ENCODE measurements at regions of chrX and their contacts with region 1.

Region 1: DNA sequence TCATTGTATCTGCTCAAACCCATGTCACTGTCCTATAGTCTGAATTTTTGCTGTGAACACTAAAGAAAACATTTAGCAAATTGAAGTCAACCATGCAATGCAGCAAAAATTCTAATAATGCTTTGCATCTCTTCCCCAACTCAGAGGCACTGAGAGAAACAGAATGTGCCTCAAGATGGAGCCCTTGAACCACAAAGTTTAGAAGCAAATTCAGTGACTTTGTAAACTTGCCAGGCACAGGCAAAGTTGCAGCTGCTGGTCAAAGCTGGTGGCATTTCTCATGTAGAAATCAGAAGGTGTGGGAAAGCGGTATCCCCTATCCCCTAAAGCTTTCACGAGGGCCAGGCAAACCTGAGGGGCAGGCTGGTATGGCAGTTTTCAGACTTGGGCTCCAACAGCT is 121.7 kb upstream of the DIPK2B start:
- DNase-seq: no peak
- H3K4me3 ChIP-seq: no peak overlapping the region
- H3K27ac ChIP-seq: no peak overlapping the region
- H3K4me1 ChIP-seq: no peaks in the 10 kb centered on the region
- H3K27me3 ChIP-seq: no peaks in the 10 kb centered on the region
- CTCF ChIP-seq: peak in 2 of 3 experiments; percentile 30 to 65

Region 2: GRCh38 chrX:45385757-45386156 is 63.4 kb after region 1 on chrX:
- intact Hi-C with region 1: no loop called
- DNase-seq: no peak
- H3K4me3 ChIP-seq: no peak overlapping the region
- H3K27ac ChIP-seq: no peak overlapping the region
- H3K4me1 ChIP-seq: no peaks in the 10 kb centered on the region
- H3K27me3 ChIP-seq: no peaks in the 10 kb centered on the region
- CTCF ChIP-seq: no peak

Region 3: DNA sequence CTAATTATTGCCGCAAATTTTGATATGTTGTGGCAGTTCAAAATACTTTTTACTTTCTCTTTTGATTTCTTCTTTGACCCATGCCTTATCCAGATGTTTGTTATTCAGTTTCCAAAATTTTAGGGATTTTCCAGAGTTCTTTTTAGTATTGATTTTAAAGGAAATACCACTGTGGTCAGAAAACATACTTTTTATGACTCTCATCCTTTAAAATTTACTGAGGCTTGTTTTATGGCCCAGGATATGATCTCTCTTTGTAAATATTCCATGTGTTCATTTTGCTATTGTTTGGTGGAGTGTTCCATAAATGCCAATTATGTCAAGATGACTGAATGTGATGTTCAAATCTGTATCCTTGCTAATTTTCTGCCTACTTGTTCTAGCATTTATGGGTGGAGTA is 150.6 kb after region 1 on chrX:
- intact Hi-C with region 1: no loop called
- DNase-seq: no peak
- H3K4me3 ChIP-seq: no peak overlapping the region
- H3K27ac ChIP-seq: no peak overlapping the region
- H3K4me1 ChIP-seq: no peaks in the 10 kb centered on the region
- H3K27me3 ChIP-seq: no peaks in the 10 kb centered on the region
- CTCF ChIP-seq: no peak

Region 4: GRCh38 chrX:45505214-45505613 is 182.8 kb after region 1 on chrX:
- intact Hi-C with region 1: loop called (anchors 5 kb)
- DNase-seq: no peak
- H3K4me3 ChIP-seq: no peak overlapping the region
- H3K27ac ChIP-seq: no peak overlapping the region
- H3K4me1 ChIP-seq: peaks cover 0 to 19% of the 10 kb centered on the region in 2 donors
- H3K27me3 ChIP-seq: no peaks in the 10 kb centered on the region
- CTCF ChIP-seq: no peak

Region 5: DNA sequence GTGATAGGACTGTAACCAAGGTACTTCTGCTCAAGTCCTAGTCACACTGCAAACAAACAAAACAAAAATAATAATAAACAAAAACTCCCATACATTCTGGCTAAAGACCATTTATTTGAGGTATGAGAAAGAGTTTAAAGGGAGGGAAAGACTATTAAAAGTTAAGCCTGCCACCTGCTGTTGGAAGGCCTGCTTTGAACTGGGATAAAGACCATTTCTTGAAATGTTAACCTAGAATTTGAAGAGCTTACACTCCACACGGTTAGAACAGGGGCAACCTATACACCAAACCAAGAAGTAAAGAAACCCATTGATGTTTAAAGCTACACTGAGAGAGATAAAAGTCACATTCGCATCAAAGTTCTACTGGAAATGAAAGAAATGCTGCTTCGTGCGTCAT is 427.0 kb after region 1 on chrX:
- intact Hi-C with region 1: loop called (anchors 2 kb)
- DNase-seq: no peak
- H3K4me3 ChIP-seq: no peak overlapping the region
- H3K27ac ChIP-seq: no peak overlapping the region
- H3K4me1 ChIP-seq: peaks cover 0 to 3% of the 10 kb centered on the region in 2 donors
- H3K27me3 ChIP-seq: no peaks in the 10 kb centered on the region
- CTCF ChIP-seq: peak in 2 of 3 experiments; percentile 16 to 41

Region 6: DNA sequence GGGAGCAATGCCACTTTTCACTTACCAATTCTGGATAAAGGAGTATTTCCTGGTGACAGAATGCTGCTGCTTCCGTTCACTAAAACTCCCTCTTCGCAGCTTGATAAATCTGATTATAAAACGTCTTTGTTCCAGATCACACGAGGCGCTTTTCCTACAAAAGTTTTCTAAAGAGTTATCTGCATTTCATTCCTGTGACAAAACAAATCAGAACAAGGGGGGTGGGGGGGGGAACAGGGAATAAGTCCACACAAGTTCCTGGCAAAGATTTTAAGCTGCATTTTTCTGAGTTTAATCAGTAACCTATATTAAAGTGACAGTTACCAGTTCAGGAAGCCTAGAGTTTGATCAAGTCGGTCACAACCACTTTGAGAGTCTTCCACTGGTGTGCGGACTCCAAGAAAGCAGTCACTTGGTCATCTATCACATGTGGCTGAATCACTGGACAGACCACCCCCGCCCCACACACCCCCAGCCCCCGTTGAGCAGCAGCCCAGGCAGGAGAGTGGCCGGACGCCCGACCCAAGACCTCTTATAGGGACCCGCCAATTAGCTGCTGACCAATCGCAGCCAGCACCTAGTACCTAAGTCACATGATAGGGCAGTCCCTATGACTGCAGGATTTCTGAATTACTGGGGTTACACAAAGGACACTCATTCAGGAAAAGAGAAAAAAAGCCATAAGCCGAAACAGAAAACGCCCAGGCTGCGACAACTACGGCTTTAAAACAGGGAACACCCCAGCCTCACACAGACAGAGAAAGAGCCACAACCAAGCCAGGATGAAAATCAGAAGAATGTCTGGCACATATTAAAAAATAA is 447.6 kb after region 1 on chrX:
- intact Hi-C with region 1: loop called (anchors 5 kb)
- DNase-seq: peak; percentile 55 to 86
- H3K4me3 ChIP-seq: peak overlapping the region; percentile 46 to 61
- H3K27ac ChIP-seq: peak overlapping the region; percentile 76 to 77
- H3K4me1 ChIP-seq: no peaks in the 10 kb centered on the region
- H3K27me3 ChIP-seq: no peaks in the 10 kb centered on the region
- CTCF ChIP-seq: no peak

Region 7: GRCh38 chrX:45851434-45851991 is 529.1 kb after region 1 on chrX:
- intact Hi-C with region 1: loop called (anchors 10 kb)
- DNase-seq: no peak
- H3K4me3 ChIP-seq: peak overlapping the region; percentile 50 to 83
- H3K27ac ChIP-seq: no peak overlapping the region
- H3K4me1 ChIP-seq: no peaks in the 10 kb centered on the region
- H3K27me3 ChIP-seq: no peaks in the 10 kb centered on the region
- CTCF ChIP-seq: no peak

Region 8: GRCh38 chrX:46408553-46409407 is 1086.4 kb after region 1 on chrX:
- intact Hi-C with region 1: loop called (anchors 2 kb)
- DNase-seq: peak in 1 of 2 donors; percentile 76
- H3K4me3 ChIP-seq: no peak overlapping the region
- H3K27ac ChIP-seq: no peak overlapping the region
- H3K4me1 ChIP-seq: no peaks in the 10 kb centered on the region
- H3K27me3 ChIP-seq: no peaks in the 10 kb centered on the region
- CTCF ChIP-seq: peak; percentile 66 to 91 (median 83)